ENCODE measurements at regions of chr3 and their contacts with region 1.

Region 1: GRCh38 chr3:160399125-160400029 is at the starts of genes IFT80 and SMC4:
- DNase-seq: peak; percentile 95
- ATAC-seq: peak; percentile 94
- H3K4me3 ChIP-seq: peak within 1 kb of the TSS; percentile 60
- H3K27ac ChIP-seq: peak within 1 kb of the TSS; percentile 88
- H3K4me1 ChIP-seq: peaks cover 3% of the 10 kb centered on the region; the same call in 1 of the 2 replicates
- H3K27me3 ChIP-seq: no peaks in the 10 kb centered on the region
- CTCF ChIP-seq: no peak
- POLR2A ChIP-seq: peak; percentile 90; the same call in 1 of the 2 replicates
- RAD21 ChIP-seq: no peak
- total RNA-seq, gene IFT80: 16.8 and 36.9 TPM in 2 replicates
- total RNA-seq, gene SMC4: 48.8 and 77.8 TPM in 2 replicates

Region 2: DNA sequence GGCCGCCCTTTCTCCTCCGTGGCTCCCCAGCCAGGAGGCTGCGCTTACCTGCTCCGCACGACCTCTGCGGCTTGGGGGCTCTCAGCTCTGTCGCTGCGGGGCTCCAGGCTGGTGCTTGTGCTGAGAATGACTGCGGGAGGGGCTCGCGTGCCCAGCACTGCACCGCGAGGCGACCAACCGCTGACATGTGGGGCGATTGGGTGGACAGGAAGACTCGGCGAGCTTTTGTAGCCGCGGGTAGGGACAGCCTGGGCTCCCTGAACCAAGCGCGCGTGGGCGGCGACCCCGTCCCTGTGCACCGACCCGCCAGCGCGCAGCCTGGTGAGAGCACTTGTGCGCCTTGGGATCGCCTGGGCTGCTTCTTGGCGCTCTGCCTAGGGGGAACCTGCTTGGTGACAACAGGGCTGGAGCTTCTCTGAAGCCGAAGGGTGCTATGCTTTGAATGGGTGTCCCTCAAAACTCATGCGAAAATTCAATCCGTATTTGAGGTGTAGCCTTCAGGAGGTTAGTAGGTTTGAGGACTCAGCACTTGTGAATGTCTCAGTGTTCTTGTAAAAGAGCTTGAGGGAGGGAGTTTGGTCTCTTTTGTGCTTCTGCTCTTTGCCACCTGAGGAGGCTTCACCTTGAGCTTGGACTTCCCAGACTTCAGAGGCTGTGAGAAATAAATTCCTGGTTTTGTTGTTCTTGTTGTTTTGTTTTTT is 360.4 kb before region 1 on chr3:
- CTCF ChIA-PET with region 1: no interaction called
- POLR2A ChIA-PET with region 1: no interaction called
- dilution Hi-C with region 1: no loop called
- in situ Hi-C with region 1: no loop called
- intact Hi-C with region 1: loop called (anchors 5 kb)
- DNase-seq: no peak
- ATAC-seq: peak; percentile 49
- H3K4me3 ChIP-seq: peak overlapping the region; percentile 36
- H3K27ac ChIP-seq: no peak overlapping the region
- H3K4me1 ChIP-seq: peaks cover 4% of the 10 kb centered on the region; the same call in 1 of the 2 replicates
- H3K27me3 ChIP-seq: peaks cover 21% of the 10 kb centered on the region
- CTCF ChIP-seq: no peak
- POLR2A ChIP-seq: no peak
- RAD21 ChIP-seq: no peak

Region 3: DNA sequence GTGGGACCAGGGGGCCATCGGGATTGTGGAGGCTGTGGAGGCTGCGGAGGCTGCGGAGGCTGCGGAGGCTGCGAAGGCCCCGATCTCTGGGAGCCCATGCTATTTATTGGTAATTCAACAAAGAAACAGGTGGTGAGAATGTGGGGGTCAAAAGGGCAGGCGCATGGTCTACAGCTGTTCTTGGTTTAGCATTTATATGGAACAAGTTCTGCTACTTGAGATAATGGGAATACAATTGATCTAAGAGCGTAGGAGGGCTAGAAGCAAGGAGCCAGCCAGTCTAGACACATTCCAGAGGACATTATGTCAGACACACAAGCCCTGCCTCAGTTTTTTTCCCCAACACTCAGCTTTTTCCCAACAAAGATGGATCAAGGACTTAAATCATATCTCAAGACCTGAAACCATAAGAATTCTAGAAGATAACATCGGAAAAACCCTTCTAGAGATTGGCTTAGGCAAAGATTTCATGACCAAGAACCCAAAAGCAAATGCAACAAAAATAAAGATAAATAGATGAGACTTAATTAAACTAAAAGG is 154.0 kb before region 1 on chr3:
- CTCF ChIA-PET with region 1: no interaction called
- POLR2A ChIA-PET with region 1: no interaction called
- dilution Hi-C with region 1: no loop called
- in situ Hi-C with region 1: no loop called
- intact Hi-C with region 1: no loop called
- DNase-seq: no peak
- ATAC-seq: no peak
- H3K4me3 ChIP-seq: no peak overlapping the region
- H3K27ac ChIP-seq: no peak overlapping the region
- H3K4me1 ChIP-seq: no peaks in the 10 kb centered on the region
- H3K27me3 ChIP-seq: no peaks in the 10 kb centered on the region; the same call in 1 of the 2 replicates
- CTCF ChIP-seq: no peak
- POLR2A ChIP-seq: no peak
- RAD21 ChIP-seq: no peak

Region 4: DNA sequence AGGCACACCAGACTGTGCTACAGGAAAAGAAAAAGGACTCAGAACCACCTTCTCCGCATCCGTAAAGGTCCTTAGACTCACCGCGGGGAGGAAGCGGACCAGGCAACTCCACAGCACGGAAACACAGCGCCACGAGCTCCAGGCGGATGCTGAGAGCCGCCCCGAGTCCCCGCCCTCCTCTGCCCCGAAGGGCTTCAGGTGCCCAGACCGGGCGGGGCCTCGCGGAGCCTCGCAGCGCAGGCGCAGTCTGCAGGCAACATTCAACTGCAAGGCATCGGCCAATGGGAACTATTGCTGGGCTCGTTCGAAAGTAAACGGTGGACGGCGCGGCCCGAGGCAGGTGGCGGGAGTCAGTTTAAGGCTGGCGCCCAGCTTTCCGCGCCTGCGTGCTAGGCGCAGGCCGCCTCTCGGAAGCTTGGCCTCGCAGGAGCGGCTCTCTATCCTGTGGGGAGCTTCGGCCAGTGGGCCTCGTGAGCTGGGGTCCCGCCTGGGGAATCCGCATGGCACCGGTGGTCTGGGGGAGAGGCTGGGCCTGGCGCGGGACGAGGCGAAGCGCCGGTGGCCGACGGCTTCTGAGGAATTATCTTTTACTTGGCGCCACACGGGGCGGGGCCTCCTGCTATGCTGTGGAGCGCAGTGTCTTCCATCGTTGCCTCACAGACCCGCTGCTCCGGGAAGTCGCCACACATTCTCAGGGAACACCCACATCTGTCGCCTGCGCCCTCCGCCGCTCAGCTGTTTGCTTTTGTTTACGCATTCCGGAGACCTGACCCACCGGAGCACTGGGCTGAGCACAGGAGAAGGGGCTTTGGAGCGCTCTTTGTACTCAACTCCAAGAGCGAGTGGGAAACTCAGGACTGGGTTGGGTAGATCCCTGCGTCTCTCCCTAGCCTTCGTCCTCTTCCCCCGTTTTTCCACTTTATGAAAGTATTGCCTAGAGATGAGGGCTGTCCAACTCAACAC is 50.5 kb after region 1 on chr3 and contains the start of gene TRIM59:
- CTCF ChIA-PET with region 1: no interaction called
- POLR2A ChIA-PET with region 1: interaction called, 4 read pairs
- dilution Hi-C with region 1: no loop called
- in situ Hi-C with region 1: no loop called
- intact Hi-C with region 1: loop called (anchors 2 kb)
- DNase-seq: peak; percentile 97
- ATAC-seq: peak; percentile 88
- H3K4me3 ChIP-seq: peak within 1 kb of the TSS; percentile 68
- H3K27ac ChIP-seq: peak within 1 kb of the TSS; percentile 87
- H3K4me1 ChIP-seq: peaks cover 10% of the 10 kb centered on the region
- H3K27me3 ChIP-seq: no peaks in the 10 kb centered on the region
- CTCF ChIP-seq: no peak
- POLR2A ChIP-seq: peak; percentile 49; the same call in 1 of the 2 replicates
- RAD21 ChIP-seq: no peak
- total RNA-seq, gene TRIM59: 65.4 and 68.3 TPM in 2 replicates

Region 5: GRCh38 chr3:160754855-160755747 is 355.7 kb after region 1 on chr3:
- CTCF ChIA-PET with region 1: no interaction called
- POLR2A ChIA-PET with region 1: no interaction called
- dilution Hi-C with region 1: no loop called
- in situ Hi-C with region 1: no loop called
- intact Hi-C with region 1: no loop called
- DNase-seq: peak; percentile 88
- ATAC-seq: peak; percentile 93
- H3K4me3 ChIP-seq: peak overlapping the region; percentile 61
- H3K27ac ChIP-seq: peak overlapping the region; percentile 48
- H3K4me1 ChIP-seq: no peaks in the 10 kb centered on the region
- H3K27me3 ChIP-seq: peaks cover 12% of the 10 kb centered on the region
- CTCF ChIP-seq: no peak
- POLR2A ChIP-seq: peak; percentile 49; the same call in 1 of the 2 replicates
- RAD21 ChIP-seq: no peak

Region 6: GRCh38 chr3:162367429-162368260 is 1968.3 kb after region 1 on chr3:
- CTCF ChIA-PET with region 1: no interaction called
- POLR2A ChIA-PET with region 1: no interaction called
- dilution Hi-C with region 1: no loop called
- in situ Hi-C with region 1: no loop called
- intact Hi-C with region 1: no loop called
- DNase-seq: peak; percentile 61
- ATAC-seq: peak; percentile 76
- H3K4me3 ChIP-seq: no peak overlapping the region
- H3K27ac ChIP-seq: no peak overlapping the region
- H3K4me1 ChIP-seq: peaks cover 6% of the 10 kb centered on the region; the same call in 1 of the 2 replicates
- H3K27me3 ChIP-seq: no peaks in the 10 kb centered on the region
- CTCF ChIP-seq: no peak
- POLR2A ChIP-seq: no peak
- RAD21 ChIP-seq: no peak